ENCODE measurements at regions of chr4 and their contacts with region 1.

Region 1: GRCh38 chr4:67545199-67546003 is at the start of gene CENPC:
- DNase-seq: peak; percentile 98 to 100 (median 99)
- H3K4me3 ChIP-seq: peak within 1 kb of the TSS; percentile 57 to 98 (median 94)
- H3K27ac ChIP-seq: peak within 1 kb of the TSS; percentile 98
- H3K4me1 ChIP-seq: peaks cover 14 to 45% (median 25%) of the 10 kb centered on the region in 4 experiments
- H3K27me3 ChIP-seq: no peaks in the 10 kb centered on the region

Region 2: GRCh38 chr4:67522851-67523671 is 22.3 kb before region 1 on chr4:
- CTCF ChIA-PET with region 1: interaction called, 11 read pairs
- POLR2A ChIA-PET with region 1: no interaction called
- DNase-seq: peak in 2 of 3 donors; percentile 43 to 70
- H3K4me3 ChIP-seq: no peak overlapping the region
- H3K27ac ChIP-seq: peak overlapping the region in 1 of 2 experiments; percentile 38
- H3K4me1 ChIP-seq: peaks cover 0 to 3% (median 0%) of the 10 kb centered on the region in 4 experiments
- H3K27me3 ChIP-seq: no peaks in the 10 kb centered on the region

Region 3: DNA sequence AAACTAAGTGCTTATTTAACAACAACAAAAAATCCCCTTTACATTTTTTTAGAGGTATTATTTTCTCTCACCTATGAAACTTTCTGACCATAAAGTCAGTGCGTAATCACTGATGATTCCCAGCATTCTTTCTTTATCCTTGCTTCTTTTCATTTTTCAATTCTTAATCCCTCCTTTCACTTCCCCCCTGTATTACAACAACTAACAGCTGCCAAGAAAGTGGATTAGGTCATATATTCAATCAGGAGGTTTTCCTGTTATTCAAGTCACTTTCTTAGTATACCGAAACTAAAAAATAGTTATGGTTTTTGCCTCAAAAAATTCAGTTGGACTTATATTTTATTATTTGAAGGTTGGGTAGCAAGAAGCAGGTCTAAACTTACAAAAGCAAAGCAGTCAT is 11.0 kb after region 1 on chr4:
- CTCF ChIA-PET with region 1: interaction called, 10 read pairs
- POLR2A ChIA-PET with region 1: interaction called, 9 read pairs
- DNase-seq: no peak
- H3K4me3 ChIP-seq: peak overlapping the region in 1 of 7 experiments; percentile 32
- H3K27ac ChIP-seq: no peak overlapping the region
- H3K4me1 ChIP-seq: peaks cover 4 to 66% (median 31%) of the 10 kb centered on the region in 4 experiments
- H3K27me3 ChIP-seq: no peaks in the 10 kb centered on the region

Region 4: GRCh38 chr4:67603310-67604028 is 58.1 kb after region 1 on chr4:
- CTCF ChIA-PET with region 1: no interaction called
- POLR2A ChIA-PET with region 1: no interaction called
- DNase-seq: no peak
- H3K4me3 ChIP-seq: no peak overlapping the region
- H3K27ac ChIP-seq: no peak overlapping the region
- H3K4me1 ChIP-seq: no peaks in the 10 kb centered on the region
- H3K27me3 ChIP-seq: no peaks in the 10 kb centered on the region

Region 5: DNA sequence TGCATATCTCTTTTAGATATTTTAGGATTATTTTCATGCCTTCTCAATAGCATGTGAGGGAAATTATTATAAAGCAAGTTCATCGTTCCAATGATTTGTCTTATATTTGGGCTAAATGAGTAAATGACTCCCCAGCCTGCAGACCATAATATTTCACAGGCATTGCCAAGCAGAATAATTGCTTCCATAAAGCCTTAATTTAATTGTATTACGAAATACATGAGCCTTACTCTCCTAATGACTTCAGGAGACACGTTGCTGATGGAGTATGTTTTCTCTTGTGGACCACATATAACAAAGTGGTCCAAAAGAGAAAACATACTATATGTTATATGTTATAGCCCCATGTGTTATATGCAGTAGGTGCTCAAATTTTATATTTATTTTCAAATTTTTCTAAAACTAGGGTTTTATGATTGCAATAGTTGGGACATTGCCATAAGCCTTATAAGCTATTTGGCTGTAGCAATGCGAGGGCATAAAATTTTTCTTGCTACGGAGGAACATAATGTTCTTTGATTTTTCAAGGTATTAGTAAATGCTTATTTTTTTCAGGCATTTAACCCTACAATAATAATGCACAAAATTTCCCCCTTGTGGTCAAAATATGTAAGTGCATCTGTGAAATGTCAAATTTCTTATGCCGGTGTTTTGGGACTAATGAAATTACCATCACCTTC is 364.6 kb after region 1 on chr4:
- CTCF ChIA-PET with region 1: interaction called, 10 read pairs
- POLR2A ChIA-PET with region 1: no interaction called
- DNase-seq: peak in 2 of 3 donors; percentile 42 to 54
- H3K4me3 ChIP-seq: no peak overlapping the region
- H3K27ac ChIP-seq: no peak overlapping the region
- H3K4me1 ChIP-seq: no peaks in the 10 kb centered on the region
- H3K27me3 ChIP-seq: no peaks in the 10 kb centered on the region

Measured in common myeloid progenitor, CD34-positive (primary cell).